Posterior vena cava (tissue), 2 donors: ENCODE measurements at regions of chr18 and their contacts with region 1.

Region 1: DNA sequence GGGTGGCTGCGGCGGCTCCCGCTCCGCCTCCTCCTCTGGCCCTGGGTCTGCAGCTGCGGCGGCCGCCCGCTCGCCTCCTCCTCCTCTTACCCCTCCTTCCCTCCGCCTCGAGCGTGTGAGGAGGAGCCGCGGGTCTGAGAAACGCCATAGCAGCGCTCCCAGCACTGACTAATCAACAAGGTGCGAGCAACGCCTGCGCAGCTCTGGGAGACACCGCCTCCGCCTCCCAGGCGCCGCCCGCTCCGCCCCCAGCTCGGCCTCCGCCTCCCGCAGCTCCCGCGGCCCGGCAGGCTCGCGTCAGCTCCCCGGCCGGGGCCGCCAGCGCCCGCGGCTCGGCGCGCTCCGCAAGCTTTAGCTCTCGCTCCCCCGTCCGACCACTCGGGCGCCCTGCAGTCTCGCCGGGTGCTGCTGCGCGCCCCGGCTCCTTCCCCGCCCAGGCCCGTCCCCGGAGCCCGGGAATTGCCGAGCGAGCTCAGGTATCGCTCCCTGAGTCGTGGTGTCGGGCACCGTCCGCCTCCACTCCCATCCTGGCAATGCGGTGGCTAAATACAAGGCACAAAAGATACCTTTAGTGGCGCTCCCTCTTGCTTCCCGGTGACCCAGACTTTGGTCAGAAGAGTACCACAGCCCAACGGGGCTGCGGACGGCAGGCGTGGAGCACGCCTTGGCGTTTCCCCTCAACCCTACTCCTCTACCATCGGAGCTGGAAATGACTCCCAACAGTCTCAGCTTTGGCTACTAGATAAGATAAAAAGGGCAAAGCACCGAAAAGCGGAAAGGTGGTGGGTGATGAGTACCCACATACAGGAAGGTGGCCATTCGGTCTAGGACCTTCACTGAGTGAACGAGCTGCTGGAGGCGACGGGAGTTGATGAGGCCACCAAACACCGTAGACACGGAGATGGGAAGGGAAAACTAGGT is at the start of gene GAREM1:
- DNase-seq: peak; percentile 98
- total RNA-seq, gene GAREM1: 8.3 to 9.8 TPM

Region 2: GRCh38 chr18:32167975-32168730 is 302.8 kb before region 1 on chr18:
- intact Hi-C with region 1: loop called in 1 of 2 experiments (anchors 10 kb)
- DNase-seq: no peak

Region 3: GRCh38 chr18:32271672-32272208 is 199.2 kb before region 1 on chr18:
- intact Hi-C with region 1: loop called (anchors 5 kb)
- DNase-seq: no peak

Region 4: GRCh38 chr18:32324181-32324580 is 146.8 kb before region 1 on chr18:
- intact Hi-C with region 1: no loop called
- DNase-seq: no peak

Region 5: DNA sequence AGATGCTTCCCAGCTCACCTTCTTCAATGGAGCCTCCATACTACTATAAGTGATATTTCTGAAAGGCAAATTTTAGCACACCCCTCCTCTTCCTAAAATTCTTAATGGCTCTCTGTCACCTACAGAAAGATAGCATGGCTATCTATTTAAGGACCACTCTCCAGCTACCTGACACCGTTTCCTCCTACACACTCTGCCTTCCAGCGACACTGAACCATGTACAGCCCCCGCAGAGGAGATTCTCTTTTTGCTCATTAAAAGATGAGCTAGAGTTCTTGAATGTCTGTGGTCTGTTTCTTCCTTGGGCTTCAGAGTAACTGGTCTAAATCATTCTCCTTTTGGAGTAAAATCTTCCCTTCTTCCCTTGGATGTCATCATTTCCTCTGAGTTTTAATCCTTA is 38.1 kb after region 1 on chr18:
- intact Hi-C with region 1: no loop called
- DNase-seq: no peak